HAP-1 (cell line): ENCODE measurements at regions of chrX and their contacts with region 1.

Region 1: GRCh38 chrX:53317365-53318069 is 36.1 kb upstream of the IQSEC2 start:
- DNase-seq: peak; percentile 63 to 88
- H3K4me3 ChIP-seq: no peak overlapping the region
- H3K4me1 ChIP-seq: peaks cover 7% of the 10 kb centered on the region
- H3K27me3 ChIP-seq: peaks cover 25% of the 10 kb centered on the region

Region 2: GRCh38 chrX:52995135-52996020 is 322.1 kb before region 1 on chrX:
- in situ Hi-C with region 1: no loop called
- DNase-seq: peak; percentile 98
- H3K4me3 ChIP-seq: peak overlapping the region; percentile 75
- H3K4me1 ChIP-seq: peaks cover 11% of the 10 kb centered on the region
- H3K27me3 ChIP-seq: no peaks in the 10 kb centered on the region

Region 3: DNA sequence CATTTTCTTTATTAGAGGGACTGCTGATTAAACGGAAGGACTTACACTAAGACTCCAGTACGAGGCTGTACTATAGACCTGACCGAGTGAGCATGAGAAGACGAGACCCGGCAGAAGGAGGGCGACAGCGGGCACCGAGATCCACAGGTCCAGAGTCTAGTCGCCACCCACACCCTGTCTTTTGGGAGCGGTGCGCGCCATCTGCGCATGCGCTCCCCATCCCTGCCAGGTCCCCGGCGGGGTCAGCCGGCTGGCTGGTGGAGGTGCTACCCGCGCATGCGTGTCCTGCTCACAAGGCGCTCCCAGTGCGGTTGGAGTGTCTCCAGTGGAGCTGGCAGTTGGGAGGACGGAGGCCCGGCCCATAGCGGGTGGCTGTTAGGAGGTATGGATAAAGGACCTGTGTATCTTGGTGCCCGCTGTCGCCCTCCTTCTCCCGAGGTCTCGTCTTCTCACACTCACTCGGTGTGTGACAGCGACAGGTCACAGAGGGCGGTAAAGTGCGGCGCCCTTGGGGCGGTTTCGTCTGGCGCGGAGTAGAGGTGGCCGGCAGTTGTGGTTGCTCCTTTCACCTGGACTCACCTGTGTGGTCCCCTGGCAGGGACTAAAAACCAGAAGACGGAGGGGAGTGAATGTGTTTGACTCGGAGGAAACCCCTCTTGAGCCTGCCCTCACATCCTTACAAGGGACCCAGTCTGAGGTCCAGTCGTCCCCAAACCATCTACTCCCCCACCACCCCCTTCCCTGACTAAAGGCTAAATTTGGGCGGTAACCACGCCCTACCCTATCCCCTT is 124.2 kb after region 1 on chrX:
- in situ Hi-C with region 1: loop called (anchors 10 kb)
- DNase-seq: peak; percentile 92 to 96
- H3K4me3 ChIP-seq: peak overlapping the region; percentile 46
- H3K4me1 ChIP-seq: peaks cover 12% of the 10 kb centered on the region
- H3K27me3 ChIP-seq: peaks cover 4% of the 10 kb centered on the region; the same call in 1 of the 2 replicates

Region 4: DNA sequence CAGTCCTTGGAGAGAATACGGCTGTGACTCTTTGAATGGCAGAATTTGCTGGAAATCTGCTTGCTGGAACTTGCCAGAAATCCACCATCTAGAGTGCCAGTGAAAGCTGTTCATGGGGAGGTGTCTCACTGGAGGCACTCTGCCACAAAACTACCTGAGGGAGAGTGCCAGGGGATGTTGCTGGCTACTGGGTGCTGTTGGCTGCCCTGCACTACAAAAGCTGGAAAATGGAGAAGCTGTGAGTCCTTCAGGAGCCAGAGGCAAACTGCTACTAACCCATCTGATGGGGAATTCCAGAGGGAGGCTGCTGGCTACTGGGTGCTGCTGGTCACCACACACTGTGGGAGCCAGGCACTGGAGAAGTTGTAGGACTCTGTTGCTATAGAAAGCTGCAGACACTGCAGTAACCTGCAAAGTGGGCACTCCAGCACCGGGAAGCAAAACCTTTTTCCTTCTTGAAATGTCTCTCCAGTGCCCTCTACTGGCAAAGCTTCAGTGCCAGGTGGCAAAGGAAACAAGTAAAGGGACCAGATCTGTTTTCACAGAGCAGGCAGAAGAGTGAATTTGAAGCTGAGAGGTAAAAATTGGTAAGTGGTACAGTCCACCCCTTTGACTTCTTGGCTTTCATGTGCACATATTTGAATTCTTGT is 164.4 kb after region 1 on chrX:
- in situ Hi-C with region 1: loop called (anchors 10 kb)
- DNase-seq: peak; percentile 47 to 81
- H3K4me3 ChIP-seq: no peak overlapping the region
- H3K4me1 ChIP-seq: no peaks in the 10 kb centered on the region
- H3K27me3 ChIP-seq: no peaks in the 10 kb centered on the region; the same call in 1 of the 2 replicates